IMR-90 (cell line): ENCODE measurements at regions of chr18 and their contacts with region 1.

Region 1: GRCh38 chr18:22465859-22466457 is 48.2 kb upstream of the CTAGE1 start:
- DNase-seq: peak; percentile 98
- ATAC-seq: peak; percentile 76
- H3K4me3 ChIP-seq: no peak overlapping the region
- H3K27ac ChIP-seq: 0 out of 2 replicates have a peak overlapping the region, but pooled peaks have one; percentile 3
- H3K4me1 ChIP-seq: peaks cover 28% of the 10 kb centered on the region
- H3K27me3 ChIP-seq: no peaks in the 10 kb centered on the region
- CTCF ChIP-seq: no peak
- POLR2A ChIP-seq: peak; percentile 15; the same call in 1 of the 2 replicates
- RAD21 ChIP-seq: peak; percentile 21

Region 2: DNA sequence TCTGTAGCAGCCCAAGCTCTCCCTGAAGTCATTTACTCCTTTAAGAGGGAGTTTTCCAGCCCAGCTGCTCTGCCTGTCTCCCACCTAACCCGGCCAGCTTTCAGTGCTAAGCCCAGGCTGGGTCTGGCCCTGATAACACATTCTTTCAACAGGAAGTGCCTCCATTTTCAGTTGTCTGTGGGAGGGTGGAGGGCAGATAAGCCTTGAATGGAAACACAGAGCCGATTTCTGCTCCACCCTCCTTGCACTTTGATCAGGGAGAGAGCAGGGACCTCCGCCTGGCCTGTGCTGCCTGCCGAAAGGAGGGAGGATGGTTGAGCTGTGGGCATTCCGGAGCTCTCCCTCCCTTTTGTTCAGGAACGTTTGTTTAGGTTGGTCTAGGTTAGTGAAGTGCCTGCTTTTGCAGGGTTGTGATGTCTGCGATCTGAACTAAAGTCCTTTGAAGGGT is 271.8 kb before region 1 on chr18:
- CTCF ChIA-PET with region 1: no interaction called
- POLR2A ChIA-PET with region 1: no interaction called
- dilution Hi-C with region 1: no loop called
- in situ Hi-C with region 1: no loop called
- intact Hi-C with region 1: loop called (anchors 1 kb)
- DNase-seq: no peak
- ATAC-seq: no peak
- H3K4me3 ChIP-seq: no peak overlapping the region
- H3K27ac ChIP-seq: no peak overlapping the region
- H3K4me1 ChIP-seq: peaks cover 6% of the 10 kb centered on the region
- H3K27me3 ChIP-seq: no peaks in the 10 kb centered on the region
- CTCF ChIP-seq: no peak
- POLR2A ChIP-seq: no peak
- RAD21 ChIP-seq: no peak

Region 3: GRCh38 chr18:22348521-22349316 is 117.2 kb before region 1 on chr18:
- CTCF ChIA-PET with region 1: no interaction called
- POLR2A ChIA-PET with region 1: no interaction called
- dilution Hi-C with region 1: no loop called
- in situ Hi-C with region 1: no loop called
- intact Hi-C with region 1: loop called (anchors 2 kb)
- DNase-seq: peak; percentile 42
- ATAC-seq: peak; percentile 77
- H3K4me3 ChIP-seq: peak overlapping the region; percentile 25
- H3K27ac ChIP-seq: peak overlapping the region; percentile 74
- H3K4me1 ChIP-seq: peaks cover 22% of the 10 kb centered on the region
- H3K27me3 ChIP-seq: no peaks in the 10 kb centered on the region
- CTCF ChIP-seq: no peak
- POLR2A ChIP-seq: no peak
- RAD21 ChIP-seq: no peak

Region 4: GRCh38 chr18:22391407-22392345 is 74.3 kb before region 1 on chr18:
- CTCF ChIA-PET with region 1: no interaction called
- POLR2A ChIA-PET with region 1: no interaction called
- dilution Hi-C with region 1: no loop called
- in situ Hi-C with region 1: no loop called
- intact Hi-C with region 1: loop called (anchors 2 kb)
- DNase-seq: peak; percentile 96
- ATAC-seq: peak; percentile 84
- H3K4me3 ChIP-seq: peak overlapping the region; percentile 4; the same call in 1 of the 2 replicates
- H3K27ac ChIP-seq: no peak overlapping the region
- H3K4me1 ChIP-seq: 0 out of 2 replicates have a peak, but pooled peaks cover 4% of the 10 kb centered on the region
- H3K27me3 ChIP-seq: peaks cover 4% of the 10 kb centered on the region; the same call in 1 of the 2 replicates
- CTCF ChIP-seq: no peak
- POLR2A ChIP-seq: peak; percentile 40; the same call in 1 of the 2 replicates
- RAD21 ChIP-seq: 0 out of 2 replicates have a peak, but pooled peaks have one; percentile 4

Region 5: GRCh38 chr18:22503803-22504202 is 37.8 kb after region 1 on chr18:
- CTCF ChIA-PET with region 1: interaction called, 3 read pairs
- POLR2A ChIA-PET with region 1: no interaction called
- dilution Hi-C with region 1: no loop called
- in situ Hi-C with region 1: no loop called
- intact Hi-C with region 1: loop called (anchors 2 kb)
- DNase-seq: peak; percentile 97
- ATAC-seq: peak; percentile 87
- H3K4me3 ChIP-seq: no peak overlapping the region
- H3K27ac ChIP-seq: peak overlapping the region; percentile 93
- H3K4me1 ChIP-seq: peaks cover 14% of the 10 kb centered on the region
- H3K27me3 ChIP-seq: no peaks in the 10 kb centered on the region
- CTCF ChIP-seq: no peak
- POLR2A ChIP-seq: no peak
- RAD21 ChIP-seq: no peak